ENCODE measurements at regions of chrX and their contacts with region 1.

Region 1: GRCh38 chrX:134186362-134187121 is 50.4 kb upstream of the CCDC160 start:
- DNase-seq: peak; percentile 85
- H3K4me3 Mint-ChIP-seq: peak overlapping the region; percentile 25
- H3K27ac Mint-ChIP-seq: peak overlapping the region; percentile 24
- H3K4me1 Mint-ChIP-seq: peaks cover 14% of the 10 kb centered on the region
- H3K27me3 Mint-ChIP-seq: no peaks in the 10 kb centered on the region

Region 2: DNA sequence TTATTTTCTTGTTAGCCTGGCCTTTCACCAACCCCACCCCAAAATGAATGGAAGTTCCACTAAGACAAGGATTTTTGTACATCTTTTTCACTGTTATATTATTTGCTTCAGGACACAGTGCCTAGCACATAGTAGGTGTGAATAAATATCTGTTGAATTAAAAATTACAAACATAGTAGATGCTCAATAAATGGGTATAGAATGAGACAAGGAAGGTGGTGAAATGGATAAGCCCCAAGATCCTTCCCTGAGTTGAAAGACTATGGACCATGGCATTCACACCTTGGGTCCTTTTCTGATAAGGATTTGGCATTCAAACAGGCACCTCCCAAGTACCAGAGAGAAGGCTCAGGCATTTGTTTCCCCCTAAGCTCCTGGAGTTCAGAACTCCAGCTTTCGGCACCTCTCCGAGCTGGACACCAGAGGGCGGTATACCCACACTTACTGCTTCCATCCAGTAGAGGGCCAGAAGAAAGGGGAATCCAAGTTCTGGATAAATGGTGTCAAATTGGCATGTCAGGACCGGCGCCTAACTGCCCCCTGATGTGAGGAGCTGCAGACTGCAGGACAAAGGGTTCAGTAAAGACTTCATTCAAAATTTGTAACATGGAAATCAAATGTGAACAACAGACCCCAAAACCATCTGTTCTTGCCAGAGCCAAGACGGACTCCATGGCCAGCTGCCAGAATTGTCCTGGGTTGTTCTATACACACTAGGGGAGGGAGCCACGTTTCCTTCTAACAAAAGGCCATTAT is 394.2 kb before region 1 on chrX:
- CTCF ChIA-PET with region 1: interaction called, 3 read pairs
- intact Hi-C with region 1: loop called (anchors 2 kb)
- DNase-seq: peak; percentile 69
- H3K4me3 Mint-ChIP-seq: no peak overlapping the region
- H3K27ac Mint-ChIP-seq: no peak overlapping the region
- H3K4me1 Mint-ChIP-seq: peaks cover 1% of the 10 kb centered on the region
- H3K27me3 Mint-ChIP-seq: no peaks in the 10 kb centered on the region

Region 3: GRCh38 chrX:133892336-133892735 is 294.2 kb before region 1 on chrX:
- CTCF ChIA-PET with region 1: no interaction called
- intact Hi-C with region 1: no loop called
- DNase-seq: no peak
- H3K4me3 Mint-ChIP-seq: no peak overlapping the region
- H3K27ac Mint-ChIP-seq: no peak overlapping the region
- H3K4me1 Mint-ChIP-seq: no peaks in the 10 kb centered on the region
- H3K27me3 Mint-ChIP-seq: no peaks in the 10 kb centered on the region

Region 4: GRCh38 chrX:134006484-134007161 is 179.9 kb before region 1 on chrX:
- CTCF ChIA-PET with region 1: no interaction called
- intact Hi-C with region 1: loop called (anchors 1 kb)
- DNase-seq: peak; percentile 52
- H3K4me3 Mint-ChIP-seq: no peak overlapping the region
- H3K27ac Mint-ChIP-seq: no peak overlapping the region
- H3K4me1 Mint-ChIP-seq: peaks cover 6% of the 10 kb centered on the region
- H3K27me3 Mint-ChIP-seq: no peaks in the 10 kb centered on the region

Region 5: GRCh38 chrX:134158821-134159512 is 27.6 kb before region 1 on chrX:
- CTCF ChIA-PET with region 1: no interaction called
- intact Hi-C with region 1: loop called (anchors 1 kb)
- DNase-seq: peak; percentile 64
- H3K4me3 Mint-ChIP-seq: no peak overlapping the region
- H3K27ac Mint-ChIP-seq: peak overlapping the region; percentile 36
- H3K4me1 Mint-ChIP-seq: peaks cover 19% of the 10 kb centered on the region
- H3K27me3 Mint-ChIP-seq: no peaks in the 10 kb centered on the region

Region 6: GRCh38 chrX:134244035-134244434 is 57.5 kb after region 1 on chrX:
- CTCF ChIA-PET with region 1: interaction called, 3 read pairs
- intact Hi-C with region 1: loop called (anchors 5 kb)
- DNase-seq: no peak
- H3K4me3 Mint-ChIP-seq: no peak overlapping the region
- H3K27ac Mint-ChIP-seq: no peak overlapping the region
- H3K4me1 Mint-ChIP-seq: peaks cover 11% of the 10 kb centered on the region
- H3K27me3 Mint-ChIP-seq: peaks cover 3% of the 10 kb centered on the region

Measured in activated naive CD4-positive, alpha-beta T cell treated with anti-CD3 and anti-CD28 coated beads for 36 hours (primary cell).